Activated CD4-positive, alpha-beta T cell treated with anti-CD3 and anti-CD28 coated beads for 36 hours (primary cell): ENCODE measurements at regions of chr17 and their contacts with region 1.

Region 1: DNA sequence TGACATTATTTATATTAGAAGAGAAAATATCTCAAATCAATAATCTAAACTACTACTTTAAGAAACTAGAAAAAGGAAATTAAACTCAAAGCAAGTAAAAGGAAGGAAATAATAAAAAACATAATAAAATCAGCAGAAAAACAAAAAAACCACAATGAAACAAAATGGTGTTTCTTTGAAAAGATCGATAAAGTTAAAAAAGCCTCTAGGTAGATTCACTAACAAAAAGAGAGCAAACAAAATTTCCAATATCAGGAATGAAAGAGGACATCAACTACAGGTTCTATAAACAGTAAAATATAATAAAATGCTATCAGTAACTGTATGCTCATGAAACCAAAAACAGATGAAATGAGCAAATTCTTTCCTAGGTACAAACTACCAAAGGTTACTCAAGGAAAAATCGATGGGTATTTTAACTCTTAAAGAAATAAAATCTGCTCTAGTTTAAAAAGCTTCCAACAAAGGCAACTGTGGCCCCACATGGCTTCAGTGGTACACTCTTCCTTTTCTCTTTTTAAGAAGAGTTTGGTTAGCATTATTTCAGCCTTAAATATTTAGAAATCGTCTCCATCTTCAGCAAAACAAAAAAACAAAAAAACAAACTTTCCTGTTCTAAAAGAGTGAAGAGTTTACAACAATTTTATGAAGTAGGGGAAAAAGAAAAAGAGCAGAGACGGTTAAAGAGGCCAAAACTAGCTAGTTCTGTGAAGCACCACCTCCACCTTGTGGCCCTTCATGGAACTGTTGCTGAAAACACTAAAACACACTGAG is 102.2 kb downstream of the TRIM37 start:
- DNase-seq: peak; percentile 81
- ATAC-seq: no peak
- H3K4me3 Mint-ChIP-seq: no peak overlapping the region
- H3K27ac Mint-ChIP-seq: peak overlapping the region; percentile 55
- H3K4me1 Mint-ChIP-seq: peaks cover 34% of the 10 kb centered on the region
- H3K27me3 Mint-ChIP-seq: no peaks in the 10 kb centered on the region

Region 2: GRCh38 chr17:58046239-58047094 is 958.1 kb before region 1 on chr17:
- CTCF ChIA-PET with region 1: no interaction called
- POLR2A ChIA-PET with region 1: no interaction called
- intact Hi-C with region 1: no loop called
- DNase-seq: no peak
- ATAC-seq: no peak
- H3K4me3 Mint-ChIP-seq: no peak overlapping the region
- H3K27ac Mint-ChIP-seq: no peak overlapping the region
- H3K4me1 Mint-ChIP-seq: no peaks in the 10 kb centered on the region
- H3K27me3 Mint-ChIP-seq: peaks cover 26% of the 10 kb centered on the region

Region 3: GRCh38 chr17:58658804-58659713 is 345.5 kb before region 1 on chr17:
- CTCF ChIA-PET with region 1: no interaction called
- POLR2A ChIA-PET with region 1: no interaction called
- intact Hi-C with region 1: loop called (anchors 1 to 2 kb)
- DNase-seq: peak; percentile 84
- ATAC-seq: peak; percentile 91
- H3K4me3 Mint-ChIP-seq: peak overlapping the region; percentile 70
- H3K27ac Mint-ChIP-seq: peak overlapping the region; percentile 97
- H3K4me1 Mint-ChIP-seq: peaks cover 18% of the 10 kb centered on the region
- H3K27me3 Mint-ChIP-seq: peaks cover 3% of the 10 kb centered on the region

Region 4: GRCh38 chr17:58703137-58703972 is 301.2 kb before region 1 on chr17:
- CTCF ChIA-PET with region 1: interaction called, 4 read pairs
- POLR2A ChIA-PET with region 1: no interaction called
- intact Hi-C with region 1: loop called in 1 of 2 experiments (anchors 2 kb)
- DNase-seq: peak; percentile 16
- ATAC-seq: peak; percentile 67
- H3K4me3 Mint-ChIP-seq: no peak overlapping the region
- H3K27ac Mint-ChIP-seq: no peak overlapping the region
- H3K4me1 Mint-ChIP-seq: peaks cover 29% of the 10 kb centered on the region
- H3K27me3 Mint-ChIP-seq: no peaks in the 10 kb centered on the region

Region 5: DNA sequence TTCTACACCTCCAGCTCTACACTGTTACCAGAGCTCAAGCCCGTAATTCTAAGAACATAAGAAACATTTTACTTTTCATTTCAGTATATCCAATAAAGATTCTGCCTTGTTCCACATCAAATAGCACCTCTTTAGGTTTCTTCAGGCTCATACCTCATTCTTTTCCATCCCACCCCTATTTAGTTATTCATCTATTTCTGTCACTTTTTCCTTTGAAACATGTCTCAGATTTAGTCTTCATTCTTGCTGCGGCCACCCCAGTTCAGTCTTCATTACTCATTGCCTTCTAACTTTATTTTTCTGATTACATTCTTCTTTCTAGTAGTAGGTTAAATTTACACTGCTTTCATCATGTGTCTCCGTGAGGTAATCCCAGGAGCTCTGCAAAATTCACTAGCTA is 215.4 kb before region 1 on chr17:
- CTCF ChIA-PET with region 1: no interaction called
- POLR2A ChIA-PET with region 1: no interaction called
- intact Hi-C with region 1: loop called in 1 of 2 experiments (anchors 1 kb)
- DNase-seq: peak; percentile 29
- ATAC-seq: peak; percentile 85
- H3K4me3 Mint-ChIP-seq: no peak overlapping the region
- H3K27ac Mint-ChIP-seq: no peak overlapping the region
- H3K4me1 Mint-ChIP-seq: peaks cover 5% of the 10 kb centered on the region
- H3K27me3 Mint-ChIP-seq: peaks cover 11% of the 10 kb centered on the region

Region 6: DNA sequence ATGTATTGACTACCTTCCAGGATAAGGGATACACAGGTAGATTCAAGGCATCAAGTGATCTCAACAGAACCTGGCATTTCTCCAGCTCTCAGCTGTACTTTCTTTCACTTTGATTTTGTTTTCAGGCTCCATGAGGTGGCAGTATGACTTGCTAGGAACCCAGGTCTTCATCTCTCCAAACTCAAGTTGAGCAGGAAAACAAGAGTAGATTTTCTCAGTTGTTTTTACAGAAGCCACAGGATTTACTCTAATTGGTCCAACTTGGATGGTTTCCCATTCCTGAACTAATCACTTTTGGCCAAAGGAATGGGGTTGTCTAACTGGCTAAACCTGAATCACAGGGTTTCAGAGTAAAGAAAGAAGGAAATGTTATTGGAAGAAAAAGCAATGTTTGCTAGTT is 44.5 kb before region 1 on chr17:
- CTCF ChIA-PET with region 1: interaction called, 3 read pairs
- POLR2A ChIA-PET with region 1: no interaction called
- intact Hi-C with region 1: loop called in 1 of 2 experiments (anchors 1 kb)
- DNase-seq: no peak
- ATAC-seq: no peak
- H3K4me3 Mint-ChIP-seq: no peak overlapping the region
- H3K27ac Mint-ChIP-seq: no peak overlapping the region
- H3K4me1 Mint-ChIP-seq: no peaks in the 10 kb centered on the region
- H3K27me3 Mint-ChIP-seq: peaks cover 3% of the 10 kb centered on the region